PC-3 (cell line): ENCODE measurements at regions of chr18 and their contacts with region 1.

Region 1: DNA sequence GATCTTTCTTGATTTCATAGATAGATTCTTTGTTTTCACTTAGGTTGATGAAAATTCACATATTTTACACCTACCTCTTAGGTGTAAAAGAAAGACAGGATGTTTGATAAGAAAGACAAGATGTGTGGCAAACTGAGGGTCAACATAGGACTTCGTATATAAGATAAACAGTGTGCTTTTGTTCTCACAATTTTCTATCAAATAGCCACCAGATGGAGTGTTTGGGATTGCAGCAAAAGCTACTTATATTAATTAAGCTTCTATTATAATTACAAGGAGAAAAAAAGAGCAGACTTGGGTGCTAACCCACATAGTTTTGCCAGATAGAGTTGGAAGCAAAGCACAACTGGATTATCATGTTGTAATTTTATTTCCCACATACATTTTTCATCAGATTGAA is 232.9 kb downstream of the CDH7 start:
- DNase-seq: peak; percentile 30
- ATAC-seq: no peak
- H3K4me3 ChIP-seq: no peak overlapping the region
- H3K27ac ChIP-seq: no peak overlapping the region
- H3K4me1 ChIP-seq: no peaks in the 10 kb centered on the region
- H3K27me3 ChIP-seq: no peaks in the 10 kb centered on the region
- CTCF ChIP-seq: peak; percentile 54

Region 2: DNA sequence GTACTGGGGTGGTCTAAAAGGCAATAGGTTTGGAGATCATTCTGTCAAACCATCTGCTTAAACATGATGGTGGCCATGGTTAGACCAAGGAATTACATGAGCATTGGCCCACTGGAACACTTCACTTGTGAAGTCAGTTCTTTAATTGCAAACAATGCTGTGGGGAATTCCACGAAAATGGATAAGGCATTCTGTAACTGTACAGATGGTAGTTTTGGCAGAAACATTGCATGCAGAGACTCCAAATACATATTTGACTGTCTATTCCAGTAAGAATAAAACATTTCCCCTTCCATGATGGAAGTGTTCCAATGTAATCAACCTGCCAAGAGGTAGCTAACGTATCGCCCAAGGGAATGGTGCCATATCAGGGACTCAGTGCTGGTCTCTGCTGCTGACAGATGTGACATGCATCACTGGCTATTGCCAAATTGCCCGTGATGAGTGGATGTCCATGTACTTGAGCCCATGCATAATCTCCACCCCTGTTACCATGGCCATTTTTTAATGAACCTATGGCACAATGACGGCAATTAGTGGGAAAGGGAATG is 185.0 kb after region 1 on chr18:
- CTCF ChIA-PET with region 1: no interaction called
- POLR2A ChIA-PET with region 1: no interaction called
- intact Hi-C with region 1: no loop called
- DNase-seq: no peak
- ATAC-seq: no peak
- H3K4me3 ChIP-seq: no peak overlapping the region
- H3K27ac ChIP-seq: no peak overlapping the region
- H3K4me1 ChIP-seq: no peaks in the 10 kb centered on the region
- H3K27me3 ChIP-seq: no peaks in the 10 kb centered on the region
- CTCF ChIP-seq: no peak

Region 3: DNA sequence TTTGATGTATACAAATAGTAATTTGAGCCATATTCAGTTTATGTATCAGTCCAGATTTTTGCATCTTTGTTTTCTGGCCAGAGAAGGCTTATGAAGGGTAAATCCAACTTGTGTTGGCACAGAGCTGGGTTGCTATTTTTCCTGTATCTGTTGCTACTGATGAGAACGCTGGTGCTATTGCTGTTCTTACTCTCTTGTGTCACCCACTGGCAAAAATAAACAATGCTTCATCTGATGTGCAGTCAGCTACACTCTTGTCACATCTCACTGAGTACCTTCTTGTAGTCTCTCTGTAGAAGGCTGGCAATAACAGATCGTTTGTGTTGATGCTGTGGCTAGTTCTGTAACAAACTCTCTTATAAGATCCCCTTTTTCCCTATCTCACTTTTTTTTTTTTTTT is 296.7 kb after region 1 on chr18:
- CTCF ChIA-PET with region 1: interaction called, 3 read pairs
- POLR2A ChIA-PET with region 1: no interaction called
- intact Hi-C with region 1: loop called (anchors 5 kb)
- DNase-seq: no peak
- ATAC-seq: peak; percentile 51
- H3K4me3 ChIP-seq: no peak overlapping the region
- H3K27ac ChIP-seq: no peak overlapping the region
- H3K4me1 ChIP-seq: no peaks in the 10 kb centered on the region
- H3K27me3 ChIP-seq: no peaks in the 10 kb centered on the region
- CTCF ChIP-seq: no peak

Region 4: GRCh38 chr18:66344227-66344626 is 360.5 kb after region 1 on chr18:
- CTCF ChIA-PET with region 1: no interaction called
- POLR2A ChIA-PET with region 1: no interaction called
- intact Hi-C with region 1: loop called (anchors 10 kb)
- DNase-seq: no peak
- ATAC-seq: no peak
- H3K4me3 ChIP-seq: no peak overlapping the region
- H3K27ac ChIP-seq: no peak overlapping the region
- H3K4me1 ChIP-seq: no peaks in the 10 kb centered on the region
- H3K27me3 ChIP-seq: no peaks in the 10 kb centered on the region
- CTCF ChIP-seq: no peak